HCT116 (cell line): ENCODE measurements at regions of chr22 and their contacts with region 1.

Region 1: DNA sequence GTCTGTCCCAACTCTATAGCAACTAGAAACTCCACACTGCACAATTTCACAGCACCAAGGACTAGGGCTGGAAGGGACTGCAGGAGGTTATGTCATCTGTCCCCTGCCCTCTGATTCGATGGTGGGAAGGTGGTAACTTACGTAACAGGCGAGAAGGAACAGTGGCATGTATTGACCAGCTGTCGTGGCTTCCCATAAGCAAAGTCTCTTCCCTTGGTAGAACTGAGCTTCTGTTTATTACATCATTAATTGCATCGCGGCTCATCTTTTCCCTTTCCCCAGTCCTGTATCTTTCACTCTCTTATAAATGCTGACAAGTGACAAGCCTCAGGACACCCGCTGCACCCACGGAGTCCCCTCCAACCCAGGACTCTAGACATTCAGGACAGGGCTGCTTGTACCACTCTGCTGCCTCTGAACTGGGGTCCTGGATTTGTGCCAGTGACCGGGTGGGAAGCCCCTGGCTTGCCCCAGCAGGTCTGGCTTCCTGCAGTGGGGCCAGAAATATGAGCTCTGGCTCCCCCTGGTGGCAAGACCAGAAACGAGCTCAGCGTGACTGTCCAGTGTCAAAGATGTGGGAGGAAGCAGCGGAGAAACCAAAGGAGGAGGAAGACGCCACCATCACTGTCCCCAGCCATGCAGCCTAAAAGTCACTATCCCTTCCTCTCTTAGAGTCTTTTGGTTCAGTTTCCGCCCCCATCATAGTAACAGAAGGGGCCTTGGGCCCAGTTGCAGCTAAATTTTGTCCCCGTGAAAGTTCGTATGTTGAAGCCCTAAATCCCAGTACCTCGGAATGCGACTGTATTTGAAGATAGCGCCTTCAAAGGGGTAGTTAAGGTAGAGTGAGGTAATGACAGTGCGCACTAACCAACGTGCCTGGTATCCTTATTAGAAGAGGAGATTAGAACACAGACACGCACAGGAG is 84.5 kb downstream of the ISX start:
- DNase-seq: peak; percentile 24
- ATAC-seq: peak; percentile 82
- H3K4me3 ChIP-seq: no peak overlapping the region
- H3K27ac ChIP-seq: no peak overlapping the region
- H3K4me1 ChIP-seq: peaks cover 3 to 5% of the 10 kb centered on the region in 2 experiments; a peak in 2 of 4 replicates
- H3K27me3 ChIP-seq: no peaks in the 10 kb centered on the region
- CTCF ChIP-seq: peak; percentile 28 to 91 (median 84); a peak in 5 of 6 replicates
- POLR2A ChIP-seq: no peak
- RAD21 ChIP-seq: peak; percentile 64

Region 2: DNA sequence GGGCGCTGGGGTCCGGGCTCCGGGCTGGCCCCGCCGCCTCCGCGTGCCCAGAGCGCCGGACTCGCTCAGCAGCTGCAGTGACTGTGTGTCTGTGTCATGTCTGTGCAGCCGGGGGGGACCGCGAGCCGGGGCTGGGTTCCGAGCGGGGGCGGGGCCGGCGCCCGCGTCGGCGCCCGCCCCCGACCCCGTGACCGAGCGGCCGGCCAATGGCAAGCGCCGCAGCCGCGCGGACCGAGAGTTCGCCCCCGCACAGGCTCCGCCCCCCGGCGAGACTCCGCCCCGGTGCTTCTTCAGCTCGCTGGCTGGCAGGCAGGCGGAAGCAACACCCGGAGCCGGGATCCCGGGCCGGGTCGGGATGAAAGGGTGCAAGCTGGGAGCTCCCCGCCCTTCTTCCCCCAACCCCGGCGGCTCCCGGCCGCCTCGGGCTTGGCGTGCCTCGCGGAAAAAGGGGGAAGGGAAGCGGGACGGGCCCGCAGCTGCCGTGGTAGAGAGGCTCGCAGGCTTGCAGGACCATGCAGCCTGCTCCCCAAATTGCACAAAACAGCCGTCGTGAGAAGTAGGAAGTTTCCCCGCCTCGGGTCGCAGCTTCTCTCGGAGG is 1229.4 kb before region 1 on chr22:
- CTCF ChIA-PET with region 1: no interaction called
- POLR2A ChIA-PET with region 1: no interaction called
- RAD21 ChIA-PET with region 1: no interaction called
- intact Hi-C with region 1: loop called (anchors 10 kb)
- DNase-seq: peak; percentile 57
- ATAC-seq: peak; percentile 92
- H3K4me3 ChIP-seq: peak overlapping the region; percentile 26 to 42; a peak in 3 of 4 replicates
- H3K27ac ChIP-seq: no peak overlapping the region
- H3K4me1 ChIP-seq: peaks cover 0 to 7% of the 10 kb centered on the region in 2 experiments; a peak in 1 of 4 replicates
- H3K27me3 ChIP-seq: 0 out of 2 replicates have a peak, but pooled peaks cover 6% of the 10 kb centered on the region
- CTCF ChIP-seq: no peak
- POLR2A ChIP-seq: no peak
- RAD21 ChIP-seq: no peak

Region 3: DNA sequence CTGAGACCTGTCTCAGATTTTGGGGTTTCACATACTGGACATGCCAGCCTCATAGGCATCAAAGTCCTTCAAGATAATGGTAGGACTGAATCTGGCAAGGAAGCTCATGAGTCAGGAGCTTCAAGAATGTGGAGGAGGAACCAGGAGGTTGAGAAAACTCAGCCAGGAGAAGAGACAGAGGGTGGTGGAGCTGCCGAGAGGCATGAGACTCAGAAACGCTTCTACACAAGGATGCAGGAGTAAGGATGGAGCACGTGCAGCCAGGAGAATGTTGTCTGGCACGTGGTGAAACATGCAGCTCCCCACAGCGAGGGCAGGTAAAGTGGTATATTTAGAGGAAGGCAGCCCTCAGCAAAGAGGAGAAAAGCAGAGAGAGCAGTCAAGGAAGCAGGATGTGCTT is 233.2 kb before region 1 on chr22:
- CTCF ChIA-PET with region 1: no interaction called
- POLR2A ChIA-PET with region 1: no interaction called
- RAD21 ChIA-PET with region 1: no interaction called
- intact Hi-C with region 1: no loop called
- DNase-seq: no peak
- ATAC-seq: no peak
- H3K4me3 ChIP-seq: no peak overlapping the region
- H3K27ac ChIP-seq: no peak overlapping the region
- H3K4me1 ChIP-seq: no peaks in the 10 kb centered on the region
- H3K27me3 ChIP-seq: peaks cover 7% of the 10 kb centered on the region; the same call in 1 of the 2 replicates
- CTCF ChIP-seq: no peak
- POLR2A ChIP-seq: no peak
- RAD21 ChIP-seq: no peak

Region 4: GRCh38 chr22:34943830-34944229 is 206.6 kb before region 1 on chr22:
- CTCF ChIA-PET with region 1: interaction called, 6 read pairs
- POLR2A ChIA-PET with region 1: no interaction called
- RAD21 ChIA-PET with region 1: no interaction called
- intact Hi-C with region 1: loop called (anchors 10 kb)
- DNase-seq: no peak
- ATAC-seq: no peak
- H3K4me3 ChIP-seq: no peak overlapping the region
- H3K27ac ChIP-seq: no peak overlapping the region
- H3K4me1 ChIP-seq: no peaks in the 10 kb centered on the region
- H3K27me3 ChIP-seq: peaks cover 4% of the 10 kb centered on the region; the same call in 1 of the 2 replicates
- CTCF ChIP-seq: peak in 2 of 3 experiments; percentile 5 to 28; a peak in 1 of 6 replicates
- POLR2A ChIP-seq: no peak
- RAD21 ChIP-seq: peak; percentile 14; the same call in 1 of the 2 replicates

Region 5: DNA sequence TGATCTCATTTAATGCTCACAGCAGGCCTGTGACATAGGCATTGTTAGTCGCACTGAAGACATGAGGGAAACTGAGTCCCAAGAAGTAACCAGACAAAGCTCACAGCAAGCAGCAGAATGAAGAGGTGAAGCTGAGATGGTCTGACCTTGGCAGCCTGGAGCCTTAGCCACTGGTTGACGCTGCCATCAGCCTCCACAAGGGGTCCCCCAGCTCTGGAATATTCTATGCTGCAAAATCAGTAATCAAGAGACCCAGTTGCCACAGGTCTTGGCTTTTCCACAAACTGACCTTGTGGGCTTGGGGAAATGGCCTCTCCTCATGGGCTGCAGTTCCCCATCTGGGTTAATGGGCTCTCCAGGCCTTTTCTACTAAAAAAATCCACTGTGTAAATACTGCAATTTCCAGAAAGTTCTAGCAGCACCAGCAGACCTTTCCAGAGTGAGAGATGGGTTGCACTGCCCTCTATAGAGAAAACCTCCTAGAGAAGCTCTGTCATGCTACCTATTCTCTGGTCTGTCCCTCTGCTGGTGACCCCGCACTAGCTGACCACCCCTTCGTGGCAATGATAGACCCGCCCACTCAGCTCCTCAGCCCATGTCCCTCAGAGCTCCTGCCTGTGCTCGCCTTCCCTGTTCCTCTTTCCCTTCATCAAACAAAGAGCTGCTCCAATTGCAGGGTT is 107.1 kb before region 1 on chr22:
- CTCF ChIA-PET with region 1: interaction called, 14 read pairs
- POLR2A ChIA-PET with region 1: no interaction called
- RAD21 ChIA-PET with region 1: interaction called in 1 of 2 experiments, 3 read pairs
- intact Hi-C with region 1: loop called (anchors 1 kb)
- DNase-seq: no peak
- ATAC-seq: peak; percentile 61
- H3K4me3 ChIP-seq: no peak overlapping the region
- H3K27ac ChIP-seq: no peak overlapping the region
- H3K4me1 ChIP-seq: no peaks in the 10 kb centered on the region
- H3K27me3 ChIP-seq: peaks cover 10% of the 10 kb centered on the region; the same call in 1 of the 2 replicates
- CTCF ChIP-seq: peak; percentile 8 to 40 (median 40); a peak in 5 of 6 replicates
- POLR2A ChIP-seq: no peak
- RAD21 ChIP-seq: peak; percentile 29; the same call in 1 of the 2 replicates